ENCODE measurements at regions of chr1 and their contacts with region 1.

Region 1: GRCh38 chr1:21255278-21255942 is 34.9 kb downstream of the ECE1 start:
- DNase-seq: peak; percentile 73 to 82 (median 77)
- H3K4me3 ChIP-seq: no peak overlapping the region
- H3K4me3 Mint-ChIP-seq: no peak overlapping the region
- H3K27ac ChIP-seq: no peak overlapping the region
- H3K27ac Mint-ChIP-seq: peak overlapping the region in 5 of 7 donors; percentile 54 to 91 (median 70)
- H3K4me1 ChIP-seq: peaks cover 25% of the 10 kb centered on the region
- H3K4me1 Mint-ChIP-seq: peaks cover 20 to 40% (median 32%) of the 10 kb centered on the region in 4 donors
- H3K27me3 ChIP-seq: no peaks in the 10 kb centered on the region
- H3K27me3 Mint-ChIP-seq: no peaks in the 10 kb centered on the region

Region 2: DNA sequence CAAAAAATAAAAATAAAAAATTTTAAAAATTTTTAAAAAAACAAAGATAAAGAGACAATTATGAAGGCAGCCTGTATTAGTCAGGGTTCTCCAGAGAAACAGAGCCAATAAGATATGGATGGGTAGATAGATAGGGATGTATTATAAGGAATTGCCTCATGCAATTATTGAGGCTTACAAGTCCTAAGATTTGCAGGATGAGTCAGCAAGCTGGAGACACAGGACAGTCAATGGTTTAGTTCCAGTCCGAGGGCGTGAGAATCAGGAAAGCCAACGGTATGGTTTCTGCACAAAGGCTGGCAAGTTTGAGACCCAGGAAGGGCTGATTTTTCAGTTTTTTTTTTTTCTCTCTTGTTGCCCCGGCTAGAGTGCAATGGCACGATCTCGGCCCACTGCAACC is 54.6 kb before region 1 on chr1:
- CTCF ChIA-PET with region 1: no interaction called
- POLR2A ChIA-PET with region 1: no interaction called
- intact Hi-C with region 1: no loop called
- DNase-seq: no peak
- H3K4me3 ChIP-seq: no peak overlapping the region
- H3K4me3 Mint-ChIP-seq: no peak overlapping the region
- H3K27ac ChIP-seq: no peak overlapping the region
- H3K27ac Mint-ChIP-seq: no peak overlapping the region
- H3K4me1 ChIP-seq: no peaks in the 10 kb centered on the region
- H3K4me1 Mint-ChIP-seq: no peaks in the 10 kb centered on the region
- H3K27me3 ChIP-seq: no peaks in the 10 kb centered on the region
- H3K27me3 Mint-ChIP-seq: peaks cover 2 to 8% of the 10 kb centered on the region in 2 donors

Region 3: DNA sequence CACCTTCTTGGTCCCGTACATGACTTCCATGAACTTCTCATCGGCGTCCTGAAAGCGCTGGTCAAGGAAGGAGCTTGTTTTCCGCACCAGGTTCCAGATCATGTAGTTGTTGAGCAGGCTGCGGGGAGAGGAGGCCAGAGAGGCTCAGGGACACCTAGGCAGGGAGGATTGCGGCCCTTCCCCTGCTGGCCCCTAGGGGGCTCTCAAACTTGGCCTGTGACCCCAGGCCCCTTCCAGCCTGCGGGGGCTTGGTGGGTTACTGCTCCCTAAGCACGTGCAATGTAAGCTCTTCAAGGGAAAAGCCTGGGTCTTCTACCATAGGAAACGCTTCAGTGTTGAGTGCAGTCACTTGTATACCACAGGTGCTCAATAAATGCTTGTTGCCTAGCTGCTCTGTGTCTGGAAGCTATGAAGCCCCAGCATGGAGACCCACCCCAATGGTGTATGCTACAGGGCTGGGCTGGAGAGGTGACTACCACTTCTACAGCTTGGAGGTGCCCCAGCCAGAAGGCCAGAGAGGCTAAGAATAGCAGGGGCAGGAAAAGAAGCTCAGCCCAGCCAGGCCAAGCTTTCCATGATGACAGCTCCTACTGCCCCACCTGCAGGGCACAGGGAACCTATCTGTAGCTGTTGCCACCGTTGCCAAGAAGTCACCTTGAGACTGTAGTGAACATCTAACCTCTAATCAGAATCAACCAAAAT is 10.3 kb before region 1 on chr1:
- CTCF ChIA-PET with region 1: interaction called, 15 read pairs
- POLR2A ChIA-PET with region 1: no interaction called
- intact Hi-C with region 1: no loop called
- DNase-seq: peak in 1 of 5 donors; percentile 10
- H3K4me3 ChIP-seq: no peak overlapping the region
- H3K4me3 Mint-ChIP-seq: no peak overlapping the region
- H3K27ac ChIP-seq: no peak overlapping the region
- H3K27ac Mint-ChIP-seq: peak overlapping the region in 3 of 7 donors; percentile 12 to 53 (median 50)
- H3K4me1 ChIP-seq: no peaks in the 10 kb centered on the region
- H3K4me1 Mint-ChIP-seq: peaks cover 0 to 3% (median under 1%) of the 10 kb centered on the region in 4 donors
- H3K27me3 ChIP-seq: no peaks in the 10 kb centered on the region
- H3K27me3 Mint-ChIP-seq: no peaks in the 10 kb centered on the region

Region 4: GRCh38 chr1:21287905-21288514 is 32.6 kb after region 1 on chr1:
- CTCF ChIA-PET with region 1: interaction called, 20 read pairs
- POLR2A ChIA-PET with region 1: interaction called, 19 read pairs
- intact Hi-C with region 1: loop called (anchors 5 kb)
- DNase-seq: no peak
- H3K4me3 ChIP-seq: no peak overlapping the region
- H3K4me3 Mint-ChIP-seq: peak overlapping the region in 7 of 8 donors; percentile 51 to 95 (median 92)
- H3K27ac ChIP-seq: peak overlapping the region; percentile 68
- H3K27ac Mint-ChIP-seq: peak overlapping the region in 6 of 7 donors; percentile 58 to 95 (median 83)
- H3K4me1 ChIP-seq: peaks cover 46% of the 10 kb centered on the region
- H3K4me1 Mint-ChIP-seq: peaks cover 28 to 63% (median 43%) of the 10 kb centered on the region in 4 donors
- H3K27me3 ChIP-seq: no peaks in the 10 kb centered on the region
- H3K27me3 Mint-ChIP-seq: no peaks in the 10 kb centered on the region

Region 5: GRCh38 chr1:21308847-21309652 is 53.6 kb after region 1 on chr1:
- CTCF ChIA-PET with region 1: no interaction called
- POLR2A ChIA-PET with region 1: no interaction called
- intact Hi-C with region 1: no loop called
- DNase-seq: no peak
- H3K4me3 ChIP-seq: no peak overlapping the region
- H3K4me3 Mint-ChIP-seq: peak overlapping the region in 1 of 8 donors; percentile 30
- H3K27ac ChIP-seq: no peak overlapping the region
- H3K27ac Mint-ChIP-seq: peak overlapping the region in 6 of 7 donors; percentile 52 to 76 (median 70)
- H3K4me1 ChIP-seq: peaks cover 69% of the 10 kb centered on the region
- H3K4me1 Mint-ChIP-seq: peaks cover 46 to 74% (median 62%) of the 10 kb centered on the region in 4 donors
- H3K27me3 ChIP-seq: no peaks in the 10 kb centered on the region
- H3K27me3 Mint-ChIP-seq: no peaks in the 10 kb centered on the region

Region 6: DNA sequence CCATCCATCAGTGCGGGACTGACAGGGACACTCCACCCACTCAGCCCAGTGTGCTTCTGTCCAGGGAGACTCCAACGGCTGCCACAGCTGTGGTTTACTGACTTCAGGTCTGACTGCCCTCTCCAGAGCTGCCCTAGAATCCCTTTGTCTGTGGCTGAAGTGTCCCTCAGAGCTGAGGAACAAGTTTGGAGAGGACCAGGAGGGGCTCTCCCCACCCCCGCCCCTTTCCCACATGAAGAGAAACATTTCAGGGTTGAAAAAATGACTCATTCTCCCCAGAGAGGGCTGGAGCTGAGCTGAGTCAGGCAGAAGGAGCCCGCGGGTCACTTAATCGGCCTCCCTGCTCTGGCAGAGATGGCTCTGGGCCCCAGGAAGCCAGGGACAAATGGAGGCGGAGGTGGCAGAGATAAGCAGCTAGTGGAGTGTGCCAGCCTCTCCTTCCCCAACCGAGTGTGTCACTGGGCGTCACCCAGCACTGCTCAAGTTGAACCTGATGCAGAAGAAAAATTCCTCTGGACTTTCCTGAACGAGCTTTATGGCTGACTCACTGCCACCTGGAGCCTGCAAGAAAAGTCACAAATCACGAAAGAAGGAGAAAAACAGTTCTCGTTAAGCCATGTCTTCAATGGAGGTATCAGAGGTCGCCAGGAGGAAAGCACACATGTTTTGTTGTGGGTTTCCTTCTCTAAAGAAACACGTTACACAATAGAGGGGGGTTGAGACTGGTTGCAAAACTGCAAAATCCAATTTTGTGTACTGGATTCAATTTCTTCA is 69.1 kb after region 1 on chr1:
- CTCF ChIA-PET with region 1: interaction called, 11 read pairs
- POLR2A ChIA-PET with region 1: interaction called, 5 read pairs
- intact Hi-C with region 1: no loop called
- DNase-seq: peak; percentile 24 to 82 (median 48)
- H3K4me3 ChIP-seq: peak overlapping the region; percentile 9 to 25
- H3K4me3 Mint-ChIP-seq: peak overlapping the region; percentile 65 to 93 (median 84)
- H3K27ac ChIP-seq: peak overlapping the region; percentile 36
- H3K27ac Mint-ChIP-seq: peak overlapping the region; percentile 92 to 96 (median 94)
- H3K4me1 ChIP-seq: peaks cover 71% of the 10 kb centered on the region
- H3K4me1 Mint-ChIP-seq: peaks cover 41 to 95% (median 75%) of the 10 kb centered on the region in 4 donors
- H3K27me3 ChIP-seq: no peaks in the 10 kb centered on the region
- H3K27me3 Mint-ChIP-seq: no peaks in the 10 kb centered on the region

Region 7: DNA sequence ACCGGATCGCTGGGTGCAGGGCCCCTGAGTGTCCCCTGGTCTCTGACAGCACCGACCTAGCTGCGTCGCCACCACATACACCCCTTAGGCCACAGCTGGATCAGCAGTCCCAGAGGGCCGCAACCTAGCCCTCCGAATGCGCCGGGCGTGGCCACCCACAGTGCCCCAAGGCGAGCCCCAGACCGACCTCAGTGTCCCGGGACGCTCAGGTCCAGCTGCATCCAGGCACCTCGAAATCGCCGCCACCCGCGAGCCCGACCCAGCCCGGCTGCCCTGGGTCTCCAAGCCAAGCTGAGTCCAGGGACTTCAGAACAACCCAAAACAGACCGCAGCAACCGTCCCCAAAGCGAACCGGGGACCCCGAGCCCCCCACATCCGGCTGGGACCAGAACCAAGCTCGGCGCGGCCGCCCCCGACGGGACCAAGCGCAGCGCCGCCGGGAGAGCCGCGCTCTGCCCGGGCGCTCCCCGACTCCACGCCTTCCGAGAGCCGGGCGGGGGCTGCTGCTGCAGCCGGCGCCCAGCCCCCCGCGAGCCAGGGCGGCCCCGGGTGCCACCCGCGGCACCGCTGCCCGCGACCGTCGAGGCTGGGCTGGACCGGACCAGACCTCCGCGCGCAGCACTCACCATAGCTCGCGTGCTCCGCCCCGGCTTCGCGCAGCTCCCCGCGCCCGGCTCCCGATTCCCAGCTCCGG is 89.5 kb after region 1 on chr1:
- CTCF ChIA-PET with region 1: interaction called, 9 read pairs
- POLR2A ChIA-PET with region 1: interaction called, 8 read pairs
- intact Hi-C with region 1: loop called (anchors 1 kb)
- DNase-seq: peak in 1 of 5 donors; percentile 48
- H3K4me3 ChIP-seq: peak overlapping the region; percentile 57 to 80
- H3K4me3 Mint-ChIP-seq: peak overlapping the region; percentile 79 to 92 (median 90)
- H3K27ac ChIP-seq: peak overlapping the region; percentile 59
- H3K27ac Mint-ChIP-seq: peak overlapping the region; percentile 85 to 93 (median 90)
- H3K4me1 ChIP-seq: peaks cover 53% of the 10 kb centered on the region
- H3K4me1 Mint-ChIP-seq: peaks cover 31 to 48% (median 40%) of the 10 kb centered on the region in 4 donors
- H3K27me3 ChIP-seq: no peaks in the 10 kb centered on the region
- H3K27me3 Mint-ChIP-seq: no peaks in the 10 kb centered on the region

Region 8: DNA sequence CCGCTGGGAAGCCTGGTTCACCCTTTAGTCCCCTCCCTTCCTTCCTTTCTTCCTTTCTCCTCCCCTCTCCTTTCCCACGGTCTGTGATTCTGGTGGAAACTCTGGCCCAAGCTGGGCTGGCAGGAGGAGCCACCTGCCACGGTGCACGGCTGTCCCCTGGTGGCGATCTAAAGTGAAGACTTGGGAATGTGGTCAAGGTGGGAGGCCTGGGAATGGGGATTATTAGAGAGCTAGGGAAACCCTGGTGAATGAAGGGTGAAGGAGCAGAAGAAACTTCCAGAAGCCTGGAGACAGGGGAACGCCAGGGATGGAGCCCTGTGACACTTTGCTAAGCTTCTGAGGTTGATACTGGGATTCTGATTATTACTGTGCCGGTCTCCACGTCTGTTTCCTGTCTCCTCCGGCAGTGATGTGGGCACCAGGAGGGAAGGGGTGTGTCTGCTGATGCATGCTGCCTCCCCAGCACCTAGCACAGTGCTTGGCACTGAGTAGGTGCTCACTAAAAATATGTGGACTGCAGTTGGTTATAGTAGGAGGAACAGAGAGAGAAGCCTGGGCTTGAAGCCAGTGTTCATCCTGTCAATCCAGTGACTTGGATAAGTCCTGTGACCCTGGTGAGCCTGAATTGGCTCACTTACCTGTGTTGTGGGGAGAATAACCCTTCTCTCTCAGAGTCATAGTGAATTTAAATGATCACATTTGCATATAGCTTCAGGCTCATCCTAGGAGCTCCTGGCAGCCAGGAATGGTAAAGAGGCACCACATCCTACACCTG is 113.3 kb after region 1 on chr1:
- CTCF ChIA-PET with region 1: interaction called, 363 read pairs
- POLR2A ChIA-PET with region 1: interaction called, 23 read pairs
- intact Hi-C with region 1: loop called (anchors 1 kb)
- DNase-seq: peak in 4 of 5 donors; percentile 53 to 67 (median 56)
- H3K4me3 ChIP-seq: no peak overlapping the region
- H3K4me3 Mint-ChIP-seq: peak overlapping the region in 1 of 8 donors; percentile 51
- H3K27ac ChIP-seq: no peak overlapping the region
- H3K27ac Mint-ChIP-seq: peak overlapping the region in 3 of 7 donors; percentile 3 to 71 (median 23)
- H3K4me1 ChIP-seq: peaks cover 8% of the 10 kb centered on the region
- H3K4me1 Mint-ChIP-seq: peaks cover 9 to 16% (median 12%) of the 10 kb centered on the region in 4 donors
- H3K27me3 ChIP-seq: no peaks in the 10 kb centered on the region
- H3K27me3 Mint-ChIP-seq: no peaks in the 10 kb centered on the region

Measured in CD4-positive, alpha-beta memory T cell (primary cell).